ENCODE measurements at regions of chr2 and their contacts with region 1.

Region 1: DNA sequence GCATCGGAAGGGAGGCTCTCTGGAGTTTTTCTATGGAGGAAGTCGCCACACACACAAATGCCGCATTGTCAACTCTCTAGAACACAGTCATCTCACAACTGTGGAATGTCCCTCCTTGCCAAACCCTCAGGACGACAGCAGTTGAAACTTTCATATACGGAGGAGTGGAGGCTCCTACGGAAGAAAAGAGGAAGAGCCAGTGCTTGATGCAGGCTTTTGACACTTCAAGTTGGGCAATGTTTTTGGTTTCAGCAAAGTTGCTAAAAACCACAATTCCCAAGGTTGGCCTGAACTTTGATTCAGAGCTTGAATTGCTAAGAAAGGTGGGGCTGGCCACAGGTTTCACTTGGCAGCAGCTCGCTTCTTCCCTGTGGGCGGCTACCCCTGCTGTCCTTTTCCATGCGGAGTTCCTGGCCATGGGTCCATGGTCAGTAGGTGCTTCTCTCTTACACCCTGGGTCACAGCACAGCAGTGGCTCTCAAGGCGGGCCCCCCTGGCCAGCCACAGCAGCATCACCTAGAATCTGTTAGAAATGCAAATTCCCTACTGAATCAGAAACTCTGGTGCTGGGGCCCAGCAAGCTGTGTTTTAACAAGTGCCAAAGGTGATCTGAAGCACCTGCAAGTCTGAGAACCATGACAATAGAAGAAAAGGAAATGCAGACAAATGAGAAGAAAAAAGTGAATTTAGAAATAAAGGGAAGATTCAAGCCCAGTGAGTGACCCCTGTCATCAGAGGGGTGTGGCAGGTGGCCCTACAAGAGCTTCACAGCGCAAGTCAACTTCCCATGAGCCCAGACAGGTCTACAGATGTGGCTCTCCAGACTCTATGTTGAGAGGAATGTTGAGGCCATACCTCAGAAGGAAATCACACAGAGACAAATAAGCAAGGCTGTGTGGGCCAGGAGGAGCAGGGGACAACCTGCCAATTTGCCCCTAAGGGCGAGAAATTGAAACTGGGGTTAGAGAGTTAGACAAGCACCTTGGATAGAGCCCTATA is 856.4 kb downstream of the RNF144A start:
- DNase-seq: peak; percentile 91
- ATAC-seq: peak; percentile 86
- H3K4me3 ChIP-seq: peak overlapping the region; percentile 45
- H3K27ac ChIP-seq: peak overlapping the region; percentile 48
- H3K4me1 ChIP-seq: peaks cover 19% of the 10 kb centered on the region
- H3K27me3 ChIP-seq: no peaks in the 10 kb centered on the region
- CTCF ChIP-seq: no peak
- EP300 ChIP-seq: peak; percentile 98 to 99
- POLR2A ChIP-seq: no peak
- RAD21 ChIP-seq: peak; percentile 21; the same call in 1 of the 2 replicates

Region 2: GRCh38 chr2:7191932-7192331 is 581.7 kb before region 1 on chr2:
- CTCF ChIA-PET with region 1: no interaction called
- POLR2A ChIA-PET with region 1: no interaction called
- RAD21 ChIA-PET with region 1: no interaction called
- SMC1A ChIA-PET with region 1: no interaction called
- in situ Hi-C with region 1: no loop called
- intact Hi-C with region 1: no loop called
- DNase-seq: no peak
- ATAC-seq: no peak
- H3K4me3 ChIP-seq: no peak overlapping the region
- H3K27ac ChIP-seq: no peak overlapping the region
- H3K4me1 ChIP-seq: no peaks in the 10 kb centered on the region
- H3K27me3 ChIP-seq: no peaks in the 10 kb centered on the region
- CTCF ChIP-seq: no peak
- EP300 ChIP-seq: no peak
- POLR2A ChIP-seq: no peak
- RAD21 ChIP-seq: no peak

Region 3: DNA sequence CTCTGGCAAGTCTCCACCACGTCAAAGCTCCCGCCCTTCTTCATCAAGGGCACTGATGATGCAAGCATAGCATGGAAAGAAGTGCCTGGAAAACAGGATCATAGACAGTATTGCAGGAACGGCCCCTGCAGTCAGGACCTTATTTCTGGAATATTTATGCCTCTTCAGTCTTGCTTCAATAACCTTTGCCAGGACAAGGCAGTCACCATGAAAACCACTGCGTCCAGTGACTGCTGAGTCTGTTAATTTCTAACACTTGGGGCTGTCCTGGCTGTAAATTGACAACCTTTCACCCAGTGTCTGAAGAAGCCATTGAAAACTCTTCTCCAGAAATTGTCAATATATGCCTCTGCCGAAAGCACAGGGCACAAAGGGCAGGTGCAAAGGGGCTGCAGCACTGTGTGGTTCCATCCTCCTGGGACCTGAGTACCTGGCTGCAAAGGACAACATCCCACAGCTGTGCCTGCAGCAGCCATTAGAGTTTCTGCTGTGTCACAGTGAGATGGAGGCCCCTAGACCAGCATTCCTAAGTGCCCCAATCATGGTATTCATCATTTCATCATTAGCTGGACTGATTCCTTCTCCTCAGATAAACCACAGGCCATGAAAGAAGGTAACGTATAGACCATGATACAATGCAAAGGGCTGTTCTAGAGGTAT is 36.9 kb before region 1 on chr2:
- CTCF ChIA-PET with region 1: interaction called, 4 read pairs
- POLR2A ChIA-PET with region 1: no interaction called
- RAD21 ChIA-PET with region 1: interaction called, 3 read pairs
- SMC1A ChIA-PET with region 1: interaction called, 5 read pairs
- in situ Hi-C with region 1: no loop called
- intact Hi-C with region 1: loop called (anchors 2 kb)
- DNase-seq: no peak
- ATAC-seq: peak; percentile 33
- H3K4me3 ChIP-seq: no peak overlapping the region
- H3K27ac ChIP-seq: no peak overlapping the region
- H3K4me1 ChIP-seq: no peaks in the 10 kb centered on the region
- H3K27me3 ChIP-seq: no peaks in the 10 kb centered on the region
- CTCF ChIP-seq: no peak
- EP300 ChIP-seq: no peak
- POLR2A ChIP-seq: no peak
- RAD21 ChIP-seq: no peak

Region 4: DNA sequence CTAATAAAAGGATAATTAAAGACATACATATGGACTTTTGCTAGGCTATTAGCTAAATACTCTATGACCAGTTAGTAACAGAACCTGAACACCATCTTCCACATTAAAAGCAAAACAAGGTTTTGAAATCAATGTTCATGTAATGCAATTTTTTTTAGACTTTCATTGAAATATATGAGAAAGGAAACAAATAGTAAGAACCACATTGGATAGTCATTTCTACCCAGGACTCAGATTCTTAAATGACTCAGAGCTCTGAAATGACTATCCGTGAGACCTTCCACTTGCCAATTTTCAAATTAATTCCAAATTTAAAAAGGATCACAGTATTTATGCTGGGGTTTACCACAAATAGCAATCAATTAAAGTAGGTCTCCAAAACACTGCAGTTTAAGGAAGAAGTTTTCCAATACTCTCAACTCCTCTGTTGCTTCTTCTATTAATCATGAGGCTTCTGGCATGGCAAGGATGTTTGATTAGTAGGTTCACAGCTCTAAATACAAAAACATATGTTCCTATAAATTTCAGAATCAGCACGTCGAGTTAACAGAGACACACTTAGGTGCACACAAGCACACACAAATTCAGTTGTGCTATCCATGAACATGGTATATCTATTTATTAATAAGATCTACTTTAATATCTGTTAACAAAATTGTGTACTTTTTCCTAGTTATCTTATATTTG is 15.4 kb before region 1 on chr2:
- CTCF ChIA-PET with region 1: interaction called, 8 read pairs
- POLR2A ChIA-PET with region 1: interaction called, 3 read pairs
- RAD21 ChIA-PET with region 1: interaction called, 3 read pairs
- SMC1A ChIA-PET with region 1: interaction called, 26 read pairs
- in situ Hi-C with region 1: no loop called
- intact Hi-C with region 1: no loop called
- DNase-seq: peak; percentile 39
- ATAC-seq: peak; percentile 83
- H3K4me3 ChIP-seq: no peak overlapping the region
- H3K27ac ChIP-seq: 0 out of 2 replicates have a peak overlapping the region, but pooled peaks have one; percentile 11
- H3K4me1 ChIP-seq: peaks cover 4% of the 10 kb centered on the region; the same call in 1 of the 2 replicates
- H3K27me3 ChIP-seq: no peaks in the 10 kb centered on the region
- CTCF ChIP-seq: no peak
- EP300 ChIP-seq: peak; percentile 69 to 71; a peak in 2 of 4 replicates
- POLR2A ChIP-seq: no peak
- RAD21 ChIP-seq: no peak

Region 5: GRCh38 chr2:7792031-7792691 is 18.5 kb after region 1 on chr2:
- CTCF ChIA-PET with region 1: interaction called, 10 read pairs
- POLR2A ChIA-PET with region 1: no interaction called
- RAD21 ChIA-PET with region 1: interaction called, 3 read pairs
- SMC1A ChIA-PET with region 1: interaction called, 12 read pairs
- in situ Hi-C with region 1: no loop called
- intact Hi-C with region 1: no loop called
- DNase-seq: no peak
- ATAC-seq: no peak
- H3K4me3 ChIP-seq: no peak overlapping the region
- H3K27ac ChIP-seq: no peak overlapping the region
- H3K4me1 ChIP-seq: no peaks in the 10 kb centered on the region
- H3K27me3 ChIP-seq: no peaks in the 10 kb centered on the region
- CTCF ChIP-seq: no peak
- EP300 ChIP-seq: no peak
- POLR2A ChIP-seq: no peak
- RAD21 ChIP-seq: no peak

Region 6: DNA sequence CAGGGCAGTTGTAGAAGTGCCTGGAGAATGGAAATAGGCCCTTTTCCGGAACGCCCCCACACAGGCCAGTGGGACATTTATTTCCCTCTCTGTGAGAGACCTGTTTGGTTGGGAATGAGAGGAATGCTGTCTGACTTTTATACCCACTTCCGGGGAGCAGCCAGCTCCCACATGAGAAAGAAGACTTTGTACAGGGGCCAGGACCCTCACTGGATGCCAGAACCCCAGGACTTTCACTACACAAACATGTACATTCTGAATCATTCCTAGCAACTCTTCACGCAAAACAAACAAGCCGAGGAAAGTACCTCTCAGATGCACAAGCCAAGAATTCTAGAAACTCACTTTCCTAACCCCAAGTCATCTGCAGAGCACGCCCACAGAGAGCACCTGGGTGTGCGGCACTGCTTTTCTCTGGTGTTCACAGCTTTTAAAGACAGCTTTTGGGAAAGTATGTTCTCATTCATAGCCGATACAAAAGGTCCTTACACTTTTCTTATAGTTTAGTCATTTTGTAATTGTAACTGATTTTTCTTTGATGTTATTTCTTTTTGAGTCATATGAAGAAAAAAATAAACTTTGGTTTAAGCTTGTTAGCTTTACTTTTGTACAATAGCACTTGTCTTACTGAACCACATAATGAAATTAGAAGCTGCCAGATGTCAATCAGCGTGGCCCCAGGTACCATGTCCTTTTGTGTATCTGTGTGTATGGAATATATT is 52.1 kb after region 1 on chr2:
- CTCF ChIA-PET with region 1: interaction called, 3 read pairs
- POLR2A ChIA-PET with region 1: interaction called, 3 read pairs
- RAD21 ChIA-PET with region 1: interaction called, 7 read pairs
- SMC1A ChIA-PET with region 1: interaction called, 18 read pairs
- in situ Hi-C with region 1: no loop called
- intact Hi-C with region 1: loop called (anchors 1 kb)
- DNase-seq: peak; percentile 78
- ATAC-seq: peak; percentile 97
- H3K4me3 ChIP-seq: no peak overlapping the region
- H3K27ac ChIP-seq: peak overlapping the region; percentile 75
- H3K4me1 ChIP-seq: peaks cover 10% of the 10 kb centered on the region
- H3K27me3 ChIP-seq: no peaks in the 10 kb centered on the region
- CTCF ChIP-seq: no peak
- EP300 ChIP-seq: peak; percentile 94 to 98
- POLR2A ChIP-seq: no peak
- RAD21 ChIP-seq: peak; percentile 19; the same call in 1 of the 2 replicates

Region 7: DNA sequence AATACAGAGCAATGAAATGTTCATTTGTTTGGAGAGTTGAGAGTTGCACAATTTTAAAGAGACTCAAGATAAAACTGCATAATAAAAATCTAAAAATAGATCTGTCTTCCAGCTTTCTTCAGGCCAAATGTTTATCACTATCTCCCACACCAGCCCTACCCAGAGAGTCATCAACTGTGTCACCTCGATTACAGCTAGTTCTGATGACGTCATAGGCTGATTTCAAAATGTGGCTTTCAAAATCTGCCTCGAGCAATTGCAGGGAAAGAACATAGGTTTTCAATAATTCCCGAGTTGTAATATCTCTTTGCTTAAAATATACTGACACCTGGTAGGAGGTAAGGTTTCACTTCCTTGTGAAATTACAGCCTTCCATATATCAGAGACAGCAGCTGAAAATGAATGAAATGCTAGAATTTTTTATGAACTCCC is 230.6 kb after region 1 on chr2:
- CTCF ChIA-PET with region 1: no interaction called
- POLR2A ChIA-PET with region 1: no interaction called
- RAD21 ChIA-PET with region 1: no interaction called
- SMC1A ChIA-PET with region 1: interaction called, 5 read pairs
- in situ Hi-C with region 1: no loop called
- intact Hi-C with region 1: loop called (anchors 1 kb)
- DNase-seq: no peak
- ATAC-seq: peak; percentile 46
- H3K4me3 ChIP-seq: no peak overlapping the region
- H3K27ac ChIP-seq: no peak overlapping the region
- H3K4me1 ChIP-seq: peaks cover 4% of the 10 kb centered on the region; the same call in 1 of the 2 replicates
- H3K27me3 ChIP-seq: no peaks in the 10 kb centered on the region
- CTCF ChIP-seq: no peak
- EP300 ChIP-seq: peak; percentile 69 to 79; a peak in 2 of 4 replicates
- POLR2A ChIP-seq: no peak
- RAD21 ChIP-seq: no peak